ENCODE measurements at regions of chr12 and their contacts with region 1.

Region 1: GRCh38 chr12:120428597-120429229 is 9.2 kb upstream of the COX6A1 start:
- DNase-seq: no peak
- ATAC-seq: no peak
- H3K4me3 ChIP-seq: no peak overlapping the region
- H3K27ac ChIP-seq: no peak overlapping the region
- H3K4me1 ChIP-seq: no peaks in the 10 kb centered on the region
- H3K27me3 ChIP-seq: peaks cover 0 to 4% (median 0%) of the 10 kb centered on the region in 3 donors
- CTCF ChIP-seq: no peak

Region 2: DNA sequence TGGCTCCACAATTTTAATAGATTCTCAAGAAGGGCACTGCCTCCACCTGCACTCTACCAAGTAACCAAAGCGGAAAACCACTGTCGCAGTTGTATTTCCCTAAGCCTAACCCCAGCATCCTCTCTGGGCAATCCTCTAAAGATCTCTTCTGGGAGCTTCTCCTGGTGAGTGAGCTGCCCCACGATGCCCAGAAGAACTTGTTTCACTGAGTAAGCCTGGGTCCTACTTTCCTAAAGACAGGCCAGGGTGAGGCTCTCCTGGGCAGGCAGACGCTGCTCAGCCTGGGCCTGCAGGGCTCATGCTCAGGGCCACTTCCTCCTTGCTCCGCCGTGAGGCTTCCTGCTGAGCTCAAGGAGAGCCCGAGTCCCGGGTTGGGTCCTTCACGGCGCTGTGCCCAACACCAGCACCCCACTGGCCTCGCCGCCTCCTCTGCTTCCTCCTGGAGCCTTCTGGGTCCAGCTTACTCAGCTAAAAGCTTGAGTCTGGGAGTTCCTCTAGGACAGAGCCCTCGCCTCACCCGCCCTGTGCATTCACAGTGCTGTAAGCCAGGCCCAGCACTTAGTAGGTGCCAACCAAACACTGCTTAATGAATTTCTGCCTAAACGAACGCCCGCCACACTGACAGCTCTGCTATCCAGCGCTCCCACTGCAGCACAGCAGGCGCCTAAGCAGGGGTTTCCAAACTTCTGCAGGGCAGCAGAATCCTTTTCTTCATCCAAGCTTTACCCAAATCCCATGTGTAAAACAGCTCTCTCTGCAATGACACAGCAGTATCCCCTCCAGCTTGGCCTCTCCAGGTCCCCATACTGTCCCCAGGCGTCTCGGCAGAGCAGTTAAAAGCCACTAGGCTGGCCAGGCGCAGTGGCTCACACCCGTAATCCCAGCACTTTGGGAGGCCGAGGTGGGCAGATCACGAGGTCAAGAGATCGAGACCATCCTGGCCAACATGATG is 317.9 kb before region 1 on chr12:
- intact Hi-C with region 1: no loop called
- DNase-seq: peak; percentile 68 to 81
- ATAC-seq: peak; percentile 12 to 34 (median 30)
- H3K4me3 ChIP-seq: no peak overlapping the region
- H3K27ac ChIP-seq: no peak overlapping the region
- H3K4me1 ChIP-seq: peaks cover 32% of the 10 kb centered on the region
- H3K27me3 ChIP-seq: no peaks in the 10 kb centered on the region
- CTCF ChIP-seq: no peak

Region 3: GRCh38 chr12:120321382-120322202 is 107.1 kb before region 1 on chr12:
- intact Hi-C with region 1: loop called (anchors 5 to 10 kb)
- DNase-seq: no peak
- ATAC-seq: no peak
- H3K4me3 ChIP-seq: no peak overlapping the region
- H3K27ac ChIP-seq: no peak overlapping the region
- H3K4me1 ChIP-seq: peaks cover 4% of the 10 kb centered on the region
- H3K27me3 ChIP-seq: no peaks in the 10 kb centered on the region
- CTCF ChIP-seq: no peak

Region 4: DNA sequence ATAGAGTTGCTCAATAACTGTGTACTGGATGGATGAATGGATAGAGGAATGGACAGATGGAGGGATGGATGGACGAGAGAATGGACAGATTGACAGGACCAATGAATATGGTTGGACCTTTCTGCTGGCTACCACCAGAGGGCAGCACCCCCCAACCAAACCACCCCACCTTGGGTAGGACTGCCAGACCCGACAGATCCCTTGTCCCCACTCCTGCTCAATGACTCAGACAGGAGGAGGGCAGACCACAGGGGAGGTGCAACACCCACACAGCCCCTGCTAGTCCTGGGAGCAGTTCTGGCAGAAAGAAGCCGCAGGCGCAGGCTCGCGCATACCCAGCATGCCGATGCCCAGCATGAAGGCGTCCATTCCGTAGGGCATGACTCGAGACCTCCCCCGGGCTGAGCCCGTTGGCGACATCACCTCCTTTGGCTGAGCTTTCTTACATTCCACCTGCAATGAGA is 72.1 kb before region 1 on chr12:
- intact Hi-C with region 1: loop called (anchors 1 to 2 kb)
- DNase-seq: peak; percentile 70 to 84
- ATAC-seq: peak; percentile 92 to 98 (median 94)
- H3K4me3 ChIP-seq: no peak overlapping the region
- H3K27ac ChIP-seq: no peak overlapping the region
- H3K4me1 ChIP-seq: no peaks in the 10 kb centered on the region
- H3K27me3 ChIP-seq: peaks cover 0 to 11% (median 1%) of the 10 kb centered on the region in 3 donors
- CTCF ChIP-seq: peak; percentile 82

Measured in psoas muscle (tissue), 8 donors.